Naive thymus-derived CD4-positive, alpha-beta T cell (primary cell): ENCODE measurements at regions of chr1 and their contacts with region 1.

Region 1: GRCh38 chr1:170929835-170930554 is 5.3 kb upstream of the MROH9 start:
- DNase-seq: peak in 7 of 9 donors; percentile 15 to 43 (median 28)
- ATAC-seq: peak; percentile 66
- H3K4me3 ChIP-seq: no peak overlapping the region
- H3K4me3 Mint-ChIP-seq: no peak overlapping the region
- H3K27ac ChIP-seq: no peak overlapping the region
- H3K27ac Mint-ChIP-seq: no peak overlapping the region
- H3K4me1 ChIP-seq: no peaks in the 10 kb centered on the region
- H3K4me1 Mint-ChIP-seq: no peaks in the 10 kb centered on the region
- H3K27me3 ChIP-seq: no peaks in the 10 kb centered on the region
- H3K27me3 Mint-ChIP-seq: peaks cover 3 to 9% (median 6%) of the 10 kb centered on the region in 5 donors

Region 2: GRCh38 chr1:170685166-170685565 is 244.8 kb before region 1 on chr1:
- CTCF ChIA-PET with region 1: no interaction called
- POLR2A ChIA-PET with region 1: no interaction called
- intact Hi-C with region 1: loop called in 1 of 2 experiments (anchors 10 kb)
- DNase-seq: no peak
- ATAC-seq: no peak
- H3K4me3 ChIP-seq: no peak overlapping the region
- H3K4me3 Mint-ChIP-seq: no peak overlapping the region
- H3K27ac ChIP-seq: no peak overlapping the region
- H3K27ac Mint-ChIP-seq: no peak overlapping the region
- H3K4me1 ChIP-seq: no peaks in the 10 kb centered on the region
- H3K4me1 Mint-ChIP-seq: peaks cover 0 to 5% (median 0%) of the 10 kb centered on the region in 7 donors
- H3K27me3 ChIP-seq: no peaks in the 10 kb centered on the region
- H3K27me3 Mint-ChIP-seq: peaks cover 15 to 54% (median 29%) of the 10 kb centered on the region in 5 donors

Region 3: GRCh38 chr1:170776777-170777176 is 153.2 kb before region 1 on chr1:
- CTCF ChIA-PET with region 1: no interaction called
- POLR2A ChIA-PET with region 1: no interaction called
- intact Hi-C with region 1: no loop called
- DNase-seq: no peak
- ATAC-seq: no peak
- H3K4me3 ChIP-seq: no peak overlapping the region
- H3K4me3 Mint-ChIP-seq: no peak overlapping the region
- H3K27ac ChIP-seq: no peak overlapping the region
- H3K27ac Mint-ChIP-seq: no peak overlapping the region
- H3K4me1 ChIP-seq: no peaks in the 10 kb centered on the region
- H3K4me1 Mint-ChIP-seq: no peaks in the 10 kb centered on the region
- H3K27me3 ChIP-seq: no peaks in the 10 kb centered on the region
- H3K27me3 Mint-ChIP-seq: peaks cover 0 to 6% (median 4%) of the 10 kb centered on the region in 5 donors